B cell (primary cell): ENCODE measurements at regions of chr7 and their contacts with region 1.

Region 1: DNA sequence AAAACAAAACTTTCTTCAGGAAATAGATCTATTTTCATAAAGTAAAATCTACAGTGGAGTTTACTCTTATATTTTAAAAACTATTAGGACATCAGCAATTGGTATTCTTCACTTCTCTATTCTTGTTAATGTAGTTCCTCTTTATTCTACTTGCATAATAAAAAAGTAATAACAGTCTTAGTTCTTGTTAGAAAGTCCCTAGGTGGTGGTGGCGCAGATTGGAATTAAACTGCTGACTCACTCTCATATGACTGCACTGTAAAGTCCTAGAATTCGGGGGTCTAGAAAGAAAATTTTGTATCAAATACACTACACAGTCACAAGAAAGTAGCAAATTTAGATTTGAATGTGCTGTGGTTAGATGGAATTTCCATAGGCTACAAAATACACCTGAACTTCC is 44.6 kb upstream of the TES start:
- DNase-seq: peak; percentile 81
- ATAC-seq: peak; percentile 84
- H3K4me3 ChIP-seq: peak overlapping the region in 1 of 5 experiments; percentile 49
- H3K4me3 Mint-ChIP-seq: peak overlapping the region; percentile 71
- H3K27ac ChIP-seq: peak overlapping the region; percentile 27 to 42
- H3K27ac Mint-ChIP-seq: peak overlapping the region; percentile 90
- H3K4me1 ChIP-seq: peaks cover 44 to 45% of the 10 kb centered on the region in 2 donors
- H3K4me1 Mint-ChIP-seq: peaks cover 60% of the 10 kb centered on the region
- H3K27me3 ChIP-seq: no peaks in the 10 kb centered on the region
- H3K27me3 Mint-ChIP-seq: no peaks in the 10 kb centered on the region
- CTCF ChIP-seq: no peak

Region 2: GRCh38 chr7:115731796-115732471 is 433.8 kb before region 1 on chr7:
- CTCF ChIA-PET with region 1: no interaction called
- POLR2A ChIA-PET with region 1: no interaction called
- intact Hi-C with region 1: no loop called
- DNase-seq: no peak
- ATAC-seq: no peak
- H3K4me3 ChIP-seq: no peak overlapping the region
- H3K4me3 Mint-ChIP-seq: no peak overlapping the region
- H3K27ac ChIP-seq: no peak overlapping the region
- H3K27ac Mint-ChIP-seq: no peak overlapping the region
- H3K4me1 ChIP-seq: no peaks in the 10 kb centered on the region
- H3K4me1 Mint-ChIP-seq: no peaks in the 10 kb centered on the region
- H3K27me3 ChIP-seq: no peaks in the 10 kb centered on the region
- H3K27me3 Mint-ChIP-seq: no peaks in the 10 kb centered on the region
- CTCF ChIP-seq: no peak

Region 3: DNA sequence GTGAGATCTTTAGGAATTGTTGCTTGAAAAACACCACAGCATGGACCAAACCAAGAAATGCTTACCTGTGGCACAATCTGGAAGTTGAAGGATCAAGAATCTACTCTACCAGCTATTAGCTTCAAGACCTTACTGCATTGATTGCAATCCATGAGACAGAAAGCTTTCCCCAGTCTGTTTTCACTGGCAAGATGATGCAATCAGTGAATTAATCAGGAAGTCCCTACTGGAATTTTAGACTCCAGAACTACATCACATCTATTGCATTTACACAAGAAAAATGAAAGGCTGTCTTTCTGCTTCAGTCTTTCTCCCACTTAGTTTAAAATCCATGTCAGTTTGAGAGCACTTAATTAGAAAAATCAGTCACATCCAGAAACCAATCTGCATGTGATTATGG is 326.9 kb before region 1 on chr7:
- CTCF ChIA-PET with region 1: no interaction called
- POLR2A ChIA-PET with region 1: no interaction called
- intact Hi-C with region 1: no loop called
- DNase-seq: no peak
- ATAC-seq: no peak
- H3K4me3 ChIP-seq: no peak overlapping the region
- H3K4me3 Mint-ChIP-seq: no peak overlapping the region
- H3K27ac ChIP-seq: no peak overlapping the region
- H3K27ac Mint-ChIP-seq: no peak overlapping the region
- H3K4me1 ChIP-seq: no peaks in the 10 kb centered on the region
- H3K4me1 Mint-ChIP-seq: no peaks in the 10 kb centered on the region
- H3K27me3 ChIP-seq: no peaks in the 10 kb centered on the region
- H3K27me3 Mint-ChIP-seq: no peaks in the 10 kb centered on the region
- CTCF ChIP-seq: no peak

Region 4: GRCh38 chr7:116138202-116138801 is 27.4 kb before region 1 on chr7:
- CTCF ChIA-PET with region 1: interaction called, 40 read pairs
- POLR2A ChIA-PET with region 1: interaction called, 4 read pairs
- intact Hi-C with region 1: loop called (anchors 2 kb)
- DNase-seq: peak; percentile 74
- ATAC-seq: peak; percentile 85
- H3K4me3 ChIP-seq: no peak overlapping the region
- H3K4me3 Mint-ChIP-seq: no peak overlapping the region
- H3K27ac ChIP-seq: no peak overlapping the region
- H3K27ac Mint-ChIP-seq: no peak overlapping the region
- H3K4me1 ChIP-seq: peaks cover 6 to 7% of the 10 kb centered on the region in 2 donors
- H3K4me1 Mint-ChIP-seq: peaks cover 23% of the 10 kb centered on the region
- H3K27me3 ChIP-seq: no peaks in the 10 kb centered on the region
- H3K27me3 Mint-ChIP-seq: no peaks in the 10 kb centered on the region
- CTCF ChIP-seq: peak; percentile 89

Region 5: GRCh38 chr7:116150588-116150987 is 15.1 kb before region 1 on chr7:
- CTCF ChIA-PET with region 1: interaction called, 6 read pairs
- POLR2A ChIA-PET with region 1: no interaction called
- intact Hi-C with region 1: loop called (anchors 2 kb)
- DNase-seq: peak; percentile 54
- ATAC-seq: peak; percentile 74
- H3K4me3 ChIP-seq: peak overlapping the region in 1 of 5 experiments; percentile 13
- H3K4me3 Mint-ChIP-seq: peak overlapping the region; percentile 84
- H3K27ac ChIP-seq: no peak overlapping the region
- H3K27ac Mint-ChIP-seq: peak overlapping the region; percentile 11
- H3K4me1 ChIP-seq: peaks cover 19 to 28% of the 10 kb centered on the region in 2 donors
- H3K4me1 Mint-ChIP-seq: peaks cover 57% of the 10 kb centered on the region
- H3K27me3 ChIP-seq: no peaks in the 10 kb centered on the region
- H3K27me3 Mint-ChIP-seq: no peaks in the 10 kb centered on the region
- CTCF ChIP-seq: no peak

Region 6: GRCh38 chr7:116211006-116211912 is 45.5 kb after region 1 on chr7:
- CTCF ChIA-PET with region 1: interaction called, 12 read pairs
- POLR2A ChIA-PET with region 1: no interaction called
- intact Hi-C with region 1: loop called (anchors 2 kb)
- DNase-seq: peak; percentile 79
- ATAC-seq: peak; percentile 58
- H3K4me3 ChIP-seq: peak overlapping the region; percentile 70 to 97 (median 85)
- H3K4me3 Mint-ChIP-seq: peak overlapping the region; percentile 99
- H3K27ac ChIP-seq: peak overlapping the region; percentile 82 to 89
- H3K27ac Mint-ChIP-seq: peak overlapping the region; percentile 99
- H3K4me1 ChIP-seq: peaks cover 37 to 40% of the 10 kb centered on the region in 2 donors
- H3K4me1 Mint-ChIP-seq: peaks cover 51% of the 10 kb centered on the region
- H3K27me3 ChIP-seq: no peaks in the 10 kb centered on the region
- H3K27me3 Mint-ChIP-seq: no peaks in the 10 kb centered on the region
- CTCF ChIP-seq: no peak

Region 7: DNA sequence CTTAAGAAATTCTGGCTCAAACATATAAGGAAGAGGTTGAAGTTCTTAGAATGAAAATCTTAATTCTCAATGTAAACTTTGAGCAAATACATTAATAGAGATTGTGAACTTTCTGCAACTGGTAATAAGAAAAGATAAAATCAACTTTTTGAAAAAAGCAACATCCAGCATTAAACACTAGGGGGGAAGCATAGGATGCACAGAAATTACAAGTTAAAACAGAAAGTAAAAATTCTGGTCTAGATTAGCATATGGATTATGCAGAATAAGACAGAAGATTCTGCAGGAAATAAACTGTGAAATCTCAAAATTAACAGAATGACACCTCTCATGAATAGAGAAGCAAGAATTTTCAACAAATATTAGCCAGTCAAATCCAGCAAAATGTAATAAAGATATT is 295.8 kb after region 1 on chr7:
- CTCF ChIA-PET with region 1: no interaction called
- POLR2A ChIA-PET with region 1: no interaction called
- intact Hi-C with region 1: no loop called
- DNase-seq: no peak
- ATAC-seq: no peak
- H3K4me3 ChIP-seq: no peak overlapping the region
- H3K4me3 Mint-ChIP-seq: no peak overlapping the region
- H3K27ac ChIP-seq: no peak overlapping the region
- H3K27ac Mint-ChIP-seq: no peak overlapping the region
- H3K4me1 ChIP-seq: no peaks in the 10 kb centered on the region
- H3K4me1 Mint-ChIP-seq: no peaks in the 10 kb centered on the region
- H3K27me3 ChIP-seq: no peaks in the 10 kb centered on the region
- H3K27me3 Mint-ChIP-seq: peaks cover 6% of the 10 kb centered on the region
- CTCF ChIP-seq: no peak

Region 8: DNA sequence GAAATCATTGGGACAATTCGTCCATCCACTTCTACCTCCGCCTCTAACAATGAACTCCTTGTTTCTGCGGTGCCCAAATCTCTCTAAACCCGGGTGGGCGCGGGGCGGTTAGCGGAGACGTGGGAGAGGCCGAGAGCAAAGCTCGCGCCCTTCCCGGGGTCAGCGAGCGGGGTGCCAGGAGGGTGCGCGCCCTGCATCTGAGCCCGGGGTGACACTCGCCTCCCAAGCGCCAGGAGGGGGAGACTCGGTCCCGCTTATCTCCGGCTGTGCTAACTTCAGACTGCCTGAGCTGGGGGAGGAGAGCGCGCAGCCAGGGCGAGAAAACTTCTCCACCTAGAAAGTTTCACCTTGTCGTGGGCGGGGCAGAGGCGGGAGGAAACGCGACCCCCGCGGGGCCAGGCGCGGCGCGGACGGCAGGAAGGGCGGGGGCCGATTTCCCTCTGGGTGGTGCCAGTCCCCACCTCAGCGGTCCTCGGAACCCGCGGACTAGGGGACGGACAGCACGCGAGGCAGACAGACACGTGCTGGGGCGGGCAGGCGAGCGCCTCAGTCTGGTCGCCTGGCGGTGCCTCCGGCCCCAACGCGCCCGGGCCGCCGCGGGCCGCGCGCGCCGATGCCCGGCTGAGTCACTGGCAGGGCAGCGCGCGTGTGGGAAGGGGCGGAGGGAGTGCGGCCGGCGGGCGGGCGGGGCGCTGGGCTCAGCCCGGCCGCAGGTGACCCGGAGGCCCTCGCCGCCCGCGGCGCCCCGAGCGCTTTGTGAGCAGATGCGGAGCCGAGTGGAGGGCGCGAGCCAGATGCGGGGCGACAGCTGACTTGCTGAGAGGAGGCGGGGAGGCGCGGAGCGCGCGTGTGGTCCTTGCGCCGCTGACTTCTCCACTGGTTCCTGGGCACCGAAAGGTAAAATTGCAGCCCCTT is 506.2 kb after region 1 on chr7 and contains the start of gene MET:
- CTCF ChIA-PET with region 1: no interaction called
- POLR2A ChIA-PET with region 1: no interaction called
- intact Hi-C with region 1: loop called (anchors 10 kb)
- DNase-seq: peak; percentile 71
- ATAC-seq: peak; percentile 83
- H3K4me3 ChIP-seq: peak within 1 kb of the TSS; percentile 28 to 54 (median 39)
- H3K4me3 Mint-ChIP-seq: peak within 1 kb of the TSS; percentile 82
- H3K27ac ChIP-seq: no peak within 1 kb of the TSS
- H3K27ac Mint-ChIP-seq: no peak within 1 kb of the TSS
- H3K4me1 ChIP-seq: peaks cover 14 to 15% of the 10 kb centered on the region in 2 donors
- H3K4me1 Mint-ChIP-seq: peaks cover 18% of the 10 kb centered on the region
- H3K27me3 ChIP-seq: peaks cover 0 to 52% (median 47%) of the 10 kb centered on the region in 4 experiments
- H3K27me3 Mint-ChIP-seq: peaks cover 69% of the 10 kb centered on the region
- CTCF ChIP-seq: no peak
- total RNA-seq, gene MET: 0.59 and 1.9 TPM in 2 replicates

Region 9: GRCh38 chr7:116862234-116862950 is 696.7 kb after region 1 on chr7 and contains the start of gene CAPZA2:
- CTCF ChIA-PET with region 1: no interaction called
- POLR2A ChIA-PET with region 1: no interaction called
- intact Hi-C with region 1: loop called (anchors 2 kb)
- DNase-seq: peak; percentile 96
- ATAC-seq: peak; percentile 86
- H3K4me3 ChIP-seq: peak within 1 kb of the TSS; percentile 63 to 93 (median 87)
- H3K4me3 Mint-ChIP-seq: peak within 1 kb of the TSS; percentile 92
- H3K27ac ChIP-seq: peak within 1 kb of the TSS; percentile 80 to 90
- H3K27ac Mint-ChIP-seq: peak within 1 kb of the TSS; percentile 92
- H3K4me1 ChIP-seq: peaks cover 17 to 19% of the 10 kb centered on the region in 2 donors
- H3K4me1 Mint-ChIP-seq: peaks cover 38% of the 10 kb centered on the region
- H3K27me3 ChIP-seq: no peaks in the 10 kb centered on the region
- H3K27me3 Mint-ChIP-seq: peaks cover 18% of the 10 kb centered on the region
- CTCF ChIP-seq: peak; percentile 58
- total RNA-seq, gene CAPZA2: 79.0 and 93.7 TPM in 2 replicates